OCI-LY7 (cell line): ENCODE measurements at regions of chr6 and their contacts with region 1.

Region 1: DNA sequence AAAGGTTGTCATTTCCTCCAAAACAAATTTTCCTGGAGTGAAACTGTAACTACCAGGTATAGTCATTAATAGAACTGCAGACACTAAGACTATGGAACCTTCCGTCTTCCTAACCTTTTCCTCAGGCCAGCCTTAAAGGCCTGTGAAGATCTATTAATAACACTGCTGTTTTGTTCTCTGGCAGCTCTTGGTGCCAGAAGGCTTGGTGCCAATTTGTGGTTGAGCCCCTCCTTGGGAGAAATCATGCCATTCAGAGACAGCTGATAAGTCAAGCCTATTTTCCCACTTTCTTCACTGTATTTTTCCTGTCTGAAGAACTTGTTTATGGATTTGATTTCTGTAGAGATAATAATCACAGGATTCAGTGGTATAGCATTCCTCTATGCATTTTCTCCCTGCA is 64.8 kb downstream of the HCRTR2 start:
- DNase-seq: no peak
- H3K4me3 ChIP-seq: no peak overlapping the region
- H3K27ac ChIP-seq: no peak overlapping the region
- H3K4me1 ChIP-seq: no peaks in the 10 kb centered on the region
- CTCF ChIP-seq: no peak

Region 2: GRCh38 chr6:54717849-54718455 is 521.1 kb before region 1 on chr6:
- CTCF ChIA-PET with region 1: no interaction called
- POLR2A ChIA-PET with region 1: no interaction called
- intact Hi-C with region 1: loop called (anchors 5 kb)
- DNase-seq: peak; percentile 61
- H3K4me3 ChIP-seq: no peak overlapping the region
- H3K27ac ChIP-seq: no peak overlapping the region
- H3K4me1 ChIP-seq: no peaks in the 10 kb centered on the region
- CTCF ChIP-seq: peak; percentile 87